AG04450 (cell line): ENCODE measurements at regions of chr13 and their contacts with region 1.

Region 1: DNA sequence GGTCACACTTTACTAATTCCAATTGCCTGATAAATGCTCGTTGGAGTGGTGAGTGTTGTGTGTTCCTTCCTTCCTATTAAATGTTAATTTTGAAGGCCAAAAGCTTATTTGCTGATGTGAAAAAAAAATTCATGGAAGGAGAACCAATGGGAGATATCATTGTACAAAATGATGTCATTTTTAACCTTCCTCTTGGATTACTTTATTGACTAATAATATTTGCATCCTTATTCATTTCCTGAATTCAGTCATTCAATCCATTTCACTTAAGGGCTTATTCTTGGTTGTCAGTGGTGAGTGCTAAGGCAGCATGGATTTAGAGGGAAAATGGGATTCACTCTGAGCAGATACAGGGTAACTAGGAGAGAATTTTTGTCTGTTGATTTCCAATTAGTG is 216.0 kb upstream of the HTR2A start:
- DNase-seq: no peak
- H3K4me3 ChIP-seq: no peak overlapping the region
- H3K27ac ChIP-seq: no peak overlapping the region
- H3K27me3 ChIP-seq: no peaks in the 10 kb centered on the region
- CTCF ChIP-seq: no peak

Region 2: GRCh38 chr13:47350334-47351124 is 237.6 kb after region 1 on chr13:
- CTCF ChIA-PET with region 1: interaction called, 10 read pairs
- POLR2A ChIA-PET with region 1: no interaction called
- DNase-seq: no peak
- H3K4me3 ChIP-seq: no peak overlapping the region
- H3K27ac ChIP-seq: no peak overlapping the region
- H3K27me3 ChIP-seq: no peaks in the 10 kb centered on the region
- CTCF ChIP-seq: no peak